Left cardiac atrium (tissue), 4 donors: ENCODE measurements at regions of chr1 and their contacts with region 1.

Region 1: DNA sequence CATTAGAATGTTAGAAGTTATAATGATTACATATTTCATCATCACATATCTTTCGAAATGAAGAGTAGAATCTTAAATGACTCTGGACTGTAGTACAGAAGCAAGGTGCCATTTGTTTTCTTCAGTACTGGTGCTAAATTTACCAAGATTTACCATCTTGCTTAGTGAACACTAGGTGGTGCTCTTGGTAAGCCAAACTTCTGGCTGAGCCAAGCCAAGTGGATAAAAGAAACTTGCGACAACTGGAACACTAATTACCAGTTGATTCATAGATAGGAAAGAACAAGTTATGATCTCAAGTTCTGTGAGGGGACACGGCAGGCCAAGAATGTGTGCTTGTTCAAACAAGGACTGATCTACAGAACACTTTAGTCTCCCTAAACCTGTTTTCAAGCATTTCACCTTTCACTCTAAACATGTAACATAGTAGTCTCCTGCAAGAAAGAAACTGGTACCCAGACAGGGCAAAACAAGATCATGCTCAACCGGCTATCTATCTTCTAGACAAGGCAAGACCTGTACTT is 19.8 kb downstream of the SPRTN start:
- DNase-seq: peak; percentile 23
- ATAC-seq: peak; percentile 81 to 84

Region 2: GRCh38 chr1:231421993-231422764 is 64.3 kb after region 1 on chr1 and contains the start of gene EGLN1:
- intact Hi-C with region 1: loop called (anchors 2 to 10 kb)
- DNase-seq: peak; percentile 90
- ATAC-seq: peak; percentile 94 to 95
- total RNA-seq, gene EGLN1: 53.6 to 85.0 TPM

Region 3: GRCh38 chr1:231584921-231585320 is 227.0 kb after region 1 on chr1:
- intact Hi-C with region 1: loop called (anchors 2 to 5 kb)
- DNase-seq: no peak
- ATAC-seq: no peak

Region 4: DNA sequence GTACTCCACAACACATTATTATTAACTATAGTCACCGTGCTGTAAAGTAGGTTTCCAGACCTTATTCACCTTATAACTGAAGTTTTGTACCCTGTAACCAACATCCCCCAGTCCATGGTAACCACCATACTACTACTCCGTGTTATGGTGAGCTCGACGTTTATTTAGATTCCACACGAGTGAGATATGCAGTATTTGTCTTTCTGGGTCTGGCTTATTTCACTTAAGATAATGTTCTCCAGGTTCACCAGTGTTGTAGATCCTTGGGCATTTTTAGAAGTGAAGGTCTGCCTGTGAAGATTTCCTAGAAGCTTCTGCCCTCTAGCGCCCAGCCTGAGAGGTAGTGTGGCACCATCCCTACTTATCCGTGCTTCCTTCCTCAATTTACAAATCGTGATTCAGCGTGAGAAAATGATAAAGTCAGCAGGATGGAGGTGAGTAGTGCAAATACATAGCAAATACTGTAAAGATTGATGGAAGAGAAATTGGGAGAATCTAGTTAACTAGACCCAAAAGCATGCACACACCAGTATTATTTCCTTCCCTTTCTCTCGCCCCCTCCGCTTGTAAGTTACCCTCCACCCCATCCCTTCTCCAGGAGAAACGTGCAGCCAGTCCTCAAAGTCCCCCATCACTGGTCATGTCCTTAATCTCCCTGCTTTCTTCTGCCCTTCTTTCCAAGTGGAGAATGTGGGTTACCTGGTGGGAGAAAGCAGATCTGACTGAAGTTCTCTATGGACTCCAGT is 232.7 kb after region 1 on chr1:
- intact Hi-C with region 1: loop called (anchors 2 to 5 kb)
- DNase-seq: peak; percentile 55
- ATAC-seq: peak; percentile 84 to 94